Posterior cingulate gyrus (tissue), 11 donors: ENCODE measurements at regions of chr3 and their contacts with region 1.

Region 1: DNA sequence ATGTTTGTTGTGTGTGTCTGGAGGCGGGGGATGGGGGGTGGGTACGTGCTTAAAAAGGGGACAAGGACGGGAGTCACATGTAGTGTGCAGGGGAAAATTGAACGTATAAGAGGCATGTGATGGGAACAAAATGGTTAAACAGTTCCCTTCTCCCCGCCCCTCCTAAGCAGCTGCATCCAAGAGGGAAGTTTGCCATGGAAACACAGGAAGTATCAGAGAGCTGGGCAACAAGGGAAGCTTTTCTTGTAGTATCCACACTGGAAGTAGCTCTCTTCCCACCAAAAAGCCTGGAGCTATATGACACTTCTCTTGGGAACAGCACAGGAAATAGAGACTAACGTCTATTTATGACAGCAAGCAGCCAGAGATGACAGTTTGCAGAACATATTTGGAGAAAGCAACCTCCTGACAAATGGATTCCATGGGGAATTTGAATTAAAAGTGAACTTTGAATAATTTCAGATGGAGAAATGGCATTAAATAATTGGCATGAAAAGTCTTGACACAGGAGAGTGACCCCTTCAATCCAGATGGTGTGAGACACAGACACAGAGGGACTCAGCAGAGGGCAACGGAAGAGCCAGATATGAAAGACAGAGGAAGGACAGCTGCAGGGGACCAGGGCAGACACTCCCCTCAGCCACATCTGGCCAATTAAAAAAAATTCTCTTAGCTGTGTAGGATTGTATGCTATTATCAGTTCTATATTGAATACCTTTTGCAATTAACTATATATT is 294.2 kb upstream of the TBL1XR1 start:
- DNase-seq: peak in 5 of 10 donors; percentile 18 to 48 (median 35)

Region 2: DNA sequence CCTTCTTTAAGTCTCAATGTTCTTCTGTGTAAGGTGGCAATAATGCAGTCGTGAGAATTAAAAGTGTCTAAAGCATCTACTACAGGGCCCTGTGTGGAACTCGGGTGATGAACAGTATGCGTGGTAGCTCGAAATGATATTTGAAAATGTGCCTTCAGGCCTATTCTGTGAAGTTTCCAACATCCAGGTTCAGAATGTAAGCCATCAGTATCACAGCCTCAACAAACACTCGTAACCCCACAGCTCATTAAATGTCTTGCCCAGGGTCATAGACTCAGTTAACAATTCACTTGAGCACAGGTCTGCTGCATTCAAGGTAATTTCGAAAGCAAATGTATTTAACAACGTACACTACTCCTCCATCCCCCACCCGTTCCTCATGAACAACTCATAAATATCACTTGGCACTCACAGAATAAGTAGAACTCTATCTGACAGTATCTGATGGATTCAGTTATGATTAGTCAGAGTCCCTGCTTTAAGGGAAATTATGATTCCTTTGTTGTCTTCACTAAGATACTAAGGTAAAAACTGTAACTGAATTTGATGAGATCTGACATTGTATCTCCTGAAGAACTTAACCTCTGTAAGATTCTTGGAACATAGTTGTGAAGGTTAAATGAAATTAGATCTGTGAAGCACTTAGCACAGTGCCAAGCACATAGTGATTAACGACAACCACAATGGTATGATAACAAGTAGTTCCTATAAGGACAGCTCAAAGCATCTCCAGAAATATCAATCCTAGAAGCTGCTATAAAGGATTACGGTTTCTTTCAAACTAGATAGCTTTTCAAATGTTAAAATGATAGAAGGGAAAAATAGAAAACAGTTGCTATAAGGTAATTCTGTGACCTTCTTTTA is 936.4 kb before region 1 on chr3:
- intact Hi-C with region 1: no loop called
- DNase-seq: no peak

Region 3: GRCh38 chr3:177197041-177197727 is 294.3 kb before region 1 on chr3 and contains the start of gene TBL1XR1:
- intact Hi-C with region 1: loop called (anchors 5 kb)
- DNase-seq: peak; percentile 86 to 98 (median 92)

Region 4: DNA sequence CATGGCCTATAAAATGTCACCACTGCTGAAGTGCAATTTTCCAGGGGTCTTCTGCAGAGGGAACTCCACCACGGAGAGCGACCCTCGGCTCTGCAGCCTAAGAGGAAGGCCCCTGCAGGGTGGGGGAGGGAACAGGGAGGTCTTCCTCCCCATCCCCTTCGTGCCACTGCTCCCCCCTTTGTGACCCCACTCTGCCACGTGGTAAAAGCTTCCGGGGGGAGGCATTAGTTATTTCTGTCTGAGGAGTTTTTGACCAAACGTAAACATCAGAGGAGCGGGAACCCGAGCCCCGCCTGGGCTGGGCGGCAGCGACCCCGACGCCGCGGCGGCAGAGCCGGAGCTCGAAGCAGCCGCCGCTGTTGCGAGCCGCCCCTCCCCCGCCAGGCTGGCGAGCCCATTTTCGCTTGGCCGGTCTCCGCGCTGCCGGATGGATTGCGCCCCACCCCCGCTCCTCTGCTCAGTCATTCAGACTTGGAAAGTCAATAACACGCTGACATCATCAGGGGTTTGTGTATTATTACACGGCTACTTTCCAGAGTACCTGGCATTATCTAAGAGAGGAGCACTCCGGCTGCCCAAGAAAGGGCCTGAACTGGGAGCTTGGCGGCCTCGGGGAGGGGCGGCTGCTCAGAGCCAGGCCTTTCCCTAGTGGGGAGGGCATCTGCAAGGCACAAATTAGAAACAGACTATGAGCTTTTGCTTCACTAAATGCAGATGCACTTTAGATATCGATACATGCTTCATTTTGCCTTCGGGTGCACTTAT is 131.7 kb before region 1 on chr3:
- intact Hi-C with region 1: loop called (anchors 5 kb)
- DNase-seq: peak; percentile 89 to 99 (median 93)

Region 5: DNA sequence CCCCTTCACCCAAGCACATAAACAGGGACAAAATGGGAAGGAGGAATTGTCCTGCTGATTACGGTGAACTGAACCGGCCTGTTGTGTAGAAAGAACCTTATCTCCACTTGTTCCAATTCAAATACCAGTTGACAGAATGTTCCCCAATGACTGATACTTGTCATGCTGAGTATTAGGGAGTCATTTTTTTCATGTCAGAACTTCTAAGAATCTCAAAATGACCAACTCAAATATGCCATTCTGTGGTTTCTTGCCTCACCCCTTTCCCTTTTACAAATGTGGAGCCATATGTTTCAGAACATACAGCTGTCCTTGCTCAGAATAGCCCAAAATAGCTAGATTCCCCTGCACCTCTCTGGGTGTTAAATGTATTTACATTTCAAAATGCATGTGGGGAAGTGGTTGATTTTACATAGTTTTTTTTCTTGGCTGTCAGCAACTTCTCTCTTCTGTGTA is 111.7 kb after region 1 on chr3:
- intact Hi-C with region 1: loop called (anchors 10 kb)
- DNase-seq: no peak